Adrenal gland (tissue), 19 donors: ENCODE measurements at regions of chr2 and their contacts with region 1.

Region 1: GRCh38 chr2:230007931-230008707 is 60.6 kb downstream of the SLC16A14 start:
- DNase-seq: peak; percentile 82 to 95 (median 87)
- H3K4me3 ChIP-seq: peak overlapping the region in 1 of 4 donors; percentile 42
- H3K27ac ChIP-seq: peak overlapping the region in 4 of 5 donors; percentile 7 to 64 (median 36)
- H3K4me1 ChIP-seq: peaks cover 4 to 9% of the 10 kb centered on the region in 2 donors
- H3K27me3 ChIP-seq: no peaks in the 10 kb centered on the region
- CTCF ChIP-seq: peak; percentile 87 to 93 (median 88)
- POLR2A ChIP-seq: no peak

Region 2: GRCh38 chr2:230614913-230615332 is 606.8 kb after region 1 on chr2:
- intact Hi-C with region 1: loop called (anchors 5 kb)
- DNase-seq: no peak
- H3K4me3 ChIP-seq: no peak overlapping the region
- H3K27ac ChIP-seq: no peak overlapping the region
- H3K4me1 ChIP-seq: no peaks in the 10 kb centered on the region
- H3K27me3 ChIP-seq: no peaks in the 10 kb centered on the region
- CTCF ChIP-seq: no peak
- POLR2A ChIP-seq: no peak